H1 (cell line): ENCODE measurements at regions of chr2 and their contacts with region 1.

Region 1: DNA sequence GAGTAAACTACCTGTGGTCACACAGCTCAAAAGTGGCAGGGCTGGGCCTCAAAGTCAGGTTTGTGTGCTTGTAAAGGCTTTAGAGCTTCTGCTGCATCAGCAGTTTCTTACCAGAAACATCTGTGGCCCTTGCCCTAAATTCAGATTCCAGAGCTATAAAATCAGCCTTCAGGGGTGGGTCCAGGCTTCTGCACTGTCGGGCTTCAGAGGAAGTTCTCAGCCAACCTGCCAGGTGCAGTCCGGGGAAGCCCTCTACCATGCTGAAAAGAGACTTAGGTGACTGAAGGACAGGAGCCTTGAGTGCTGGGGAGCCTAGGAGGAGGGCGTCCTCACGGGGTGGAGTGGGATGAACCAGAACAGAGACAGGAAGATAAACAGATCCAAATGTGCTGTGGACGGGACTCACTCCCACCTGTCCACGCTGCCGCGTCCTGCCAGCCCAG is 69.9 kb upstream of the HS6ST1 start:
- DNase-seq: no peak
- H3K4me3 ChIP-seq: no peak overlapping the region
- H3K27ac ChIP-seq: no peak overlapping the region
- H3K4me1 ChIP-seq: peaks cover 0 to 11% (median 6%) of the 10 kb centered on the region in 4 experiments; a peak in 5 of 7 replicates
- H3K27me3 ChIP-seq: no peaks in the 10 kb centered on the region
- CTCF ChIP-seq: no peak
- EP300 ChIP-seq: no peak
- POLR2A ChIP-seq: no peak
- RAD21 ChIP-seq: no peak

Region 2: DNA sequence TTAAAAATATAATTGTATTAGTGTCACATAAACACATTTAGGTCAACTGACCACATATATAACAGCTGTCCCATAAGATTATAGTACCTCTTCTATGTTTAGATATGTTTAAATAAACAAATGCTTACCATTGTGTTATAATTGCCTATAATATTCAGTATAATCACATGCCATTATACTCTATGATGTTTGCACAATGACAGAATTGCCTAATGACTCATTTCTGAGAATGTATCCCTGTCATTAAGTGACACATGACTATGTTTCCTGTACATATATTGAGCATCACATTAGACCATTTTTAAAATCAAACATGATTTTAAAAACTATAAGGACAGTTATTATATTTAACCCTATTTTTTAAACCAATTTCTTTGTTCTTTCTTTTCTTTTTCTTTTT is 159.6 kb before region 1 on chr2:
- CTCF ChIA-PET with region 1: no interaction called
- POLR2A ChIA-PET with region 1: no interaction called
- DNase-seq: no peak
- H3K4me3 ChIP-seq: no peak overlapping the region
- H3K27ac ChIP-seq: no peak overlapping the region
- H3K4me1 ChIP-seq: peaks cover 0 to 3% (median 0%) of the 10 kb centered on the region in 4 experiments; a peak in 2 of 7 replicates
- H3K27me3 ChIP-seq: peaks cover 0 to 19% (median 9%) of the 10 kb centered on the region in 4 experiments; a peak in 5 of 7 replicates
- CTCF ChIP-seq: no peak
- EP300 ChIP-seq: no peak
- POLR2A ChIP-seq: no peak
- RAD21 ChIP-seq: no peak

Region 3: DNA sequence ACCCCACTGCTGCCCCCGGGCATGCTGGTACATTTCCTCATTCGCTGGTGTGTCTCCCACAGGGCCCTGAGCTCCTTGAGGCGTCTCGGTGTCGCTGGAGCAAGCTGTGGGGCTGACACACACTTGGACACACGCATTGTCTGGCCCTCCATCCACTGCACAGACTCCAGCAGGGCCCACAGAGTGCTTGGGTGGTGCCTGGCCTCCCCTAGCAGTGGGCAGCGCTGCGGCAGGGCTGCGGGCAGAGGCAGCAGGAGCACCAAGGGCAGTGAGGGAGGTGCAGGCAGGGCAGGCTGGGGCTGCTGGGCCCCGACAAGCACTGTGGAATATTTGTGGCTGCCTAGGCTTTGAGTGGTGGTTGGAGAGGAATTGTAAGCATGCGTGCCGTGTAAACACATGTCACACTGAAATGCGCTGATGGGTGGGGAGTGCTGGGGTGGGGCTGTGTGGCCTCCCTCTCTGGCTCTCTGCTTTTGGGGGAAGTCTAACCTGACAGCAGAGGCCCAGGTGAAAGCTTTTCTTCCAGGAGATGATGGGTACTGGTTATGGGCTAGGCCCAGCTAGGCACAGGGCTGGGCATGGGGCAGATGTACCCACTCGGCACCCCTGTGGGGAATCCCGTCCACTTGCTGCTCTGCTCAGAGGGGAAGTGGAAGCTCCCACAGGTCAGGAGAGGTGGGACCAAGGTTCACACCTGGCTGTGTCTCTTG is 14.4 kb before region 1 on chr2:
- CTCF ChIA-PET with region 1: interaction called, 29 read pairs
- POLR2A ChIA-PET with region 1: interaction called, 4 read pairs
- DNase-seq: no peak
- H3K4me3 ChIP-seq: no peak overlapping the region
- H3K27ac ChIP-seq: no peak overlapping the region
- H3K4me1 ChIP-seq: peaks cover 0 to 13% (median 7%) of the 10 kb centered on the region in 4 experiments; a peak in 5 of 7 replicates
- H3K27me3 ChIP-seq: peaks cover 0 to 5% (median 0%) of the 10 kb centered on the region in 4 experiments; a peak in 4 of 7 replicates
- CTCF ChIP-seq: no peak
- EP300 ChIP-seq: no peak
- POLR2A ChIP-seq: no peak
- RAD21 ChIP-seq: no peak

Region 4: GRCh38 chr2:128402911-128403670 is 14.6 kb after region 1 on chr2:
- CTCF ChIA-PET with region 1: interaction called, 12 read pairs
- POLR2A ChIA-PET with region 1: no interaction called
- DNase-seq: no peak
- H3K4me3 ChIP-seq: no peak overlapping the region
- H3K27ac ChIP-seq: no peak overlapping the region
- H3K4me1 ChIP-seq: peaks cover 0 to 13% (median 6%) of the 10 kb centered on the region in 4 experiments; a peak in 6 of 7 replicates
- H3K27me3 ChIP-seq: no peaks in the 10 kb centered on the region
- CTCF ChIP-seq: no peak
- EP300 ChIP-seq: no peak
- POLR2A ChIP-seq: no peak
- RAD21 ChIP-seq: no peak